SK-N-SH (cell line): ENCODE measurements at regions of chr15 and their contacts with region 1.

Region 1: DNA sequence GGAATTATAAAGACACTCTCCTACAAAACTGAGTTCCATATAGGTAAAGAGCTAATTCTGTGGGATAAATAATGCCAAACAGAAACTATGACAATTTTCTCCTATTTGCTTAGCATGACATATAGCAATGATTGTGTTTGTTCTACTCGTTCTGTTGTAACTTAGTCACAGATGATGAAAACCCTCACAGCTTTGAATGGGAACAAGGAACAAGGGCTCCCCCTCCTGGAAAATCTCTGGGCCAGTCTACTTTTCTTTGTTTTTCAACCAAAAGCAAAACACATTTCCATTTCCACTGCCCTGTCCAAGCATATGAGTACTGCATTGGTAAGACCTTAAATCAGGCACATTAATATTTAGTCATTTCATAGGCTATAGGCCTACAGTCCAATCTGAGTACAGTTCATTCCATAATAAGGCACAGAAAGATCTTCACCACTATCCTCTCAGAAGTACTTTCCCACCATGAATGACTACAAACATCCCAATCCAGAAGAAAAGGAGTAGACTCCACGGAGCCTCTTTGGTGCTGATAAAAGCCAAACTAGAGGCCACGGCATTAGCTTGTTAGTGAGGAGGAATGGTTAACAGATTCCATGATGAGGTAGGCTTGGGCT is 67.1 kb downstream of the ATP8B4 start:
- DNase-seq: peak; percentile 52
- H3K4me3 ChIP-seq: no peak overlapping the region; a peak in 1 of 4 replicates
- H3K27ac ChIP-seq: no peak overlapping the region
- H3K4me1 ChIP-seq: peaks cover 0 to 2% of the 10 kb centered on the region in 2 experiments; a peak in 1 of 4 replicates
- H3K27me3 ChIP-seq: no peaks in the 10 kb centered on the region
- CTCF ChIP-seq: peak; percentile 71
- EP300 ChIP-seq: no peak
- RAD21 ChIP-seq: peak; percentile 93

Region 2: DNA sequence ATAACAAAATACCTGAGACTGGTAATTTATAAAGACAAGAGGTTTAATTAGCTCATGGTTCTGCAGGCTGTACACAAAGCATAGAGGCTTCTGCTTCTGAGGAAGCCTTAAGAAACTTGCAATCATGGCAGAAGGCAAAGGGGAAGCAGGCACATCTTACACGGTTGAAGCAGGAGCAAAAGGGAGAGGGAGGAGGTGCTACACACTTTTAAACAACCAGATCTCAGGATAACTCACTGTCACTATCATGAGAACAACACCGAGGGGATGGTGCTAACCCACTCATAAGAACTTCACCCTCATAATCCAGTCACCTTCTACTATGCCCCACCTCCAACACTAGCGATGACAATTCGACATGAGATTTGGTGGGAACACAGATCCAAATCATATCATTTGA is 12.8 kb after region 1 on chr15:
- CTCF ChIA-PET with region 1: interaction called, 20 read pairs
- POLR2A ChIA-PET with region 1: no interaction called
- DNase-seq: no peak
- H3K4me3 ChIP-seq: no peak overlapping the region
- H3K27ac ChIP-seq: no peak overlapping the region
- H3K4me1 ChIP-seq: no peaks in the 10 kb centered on the region; a peak in 1 of 4 replicates
- H3K27me3 ChIP-seq: no peaks in the 10 kb centered on the region
- CTCF ChIP-seq: no peak
- EP300 ChIP-seq: no peak
- RAD21 ChIP-seq: no peak

Region 3: DNA sequence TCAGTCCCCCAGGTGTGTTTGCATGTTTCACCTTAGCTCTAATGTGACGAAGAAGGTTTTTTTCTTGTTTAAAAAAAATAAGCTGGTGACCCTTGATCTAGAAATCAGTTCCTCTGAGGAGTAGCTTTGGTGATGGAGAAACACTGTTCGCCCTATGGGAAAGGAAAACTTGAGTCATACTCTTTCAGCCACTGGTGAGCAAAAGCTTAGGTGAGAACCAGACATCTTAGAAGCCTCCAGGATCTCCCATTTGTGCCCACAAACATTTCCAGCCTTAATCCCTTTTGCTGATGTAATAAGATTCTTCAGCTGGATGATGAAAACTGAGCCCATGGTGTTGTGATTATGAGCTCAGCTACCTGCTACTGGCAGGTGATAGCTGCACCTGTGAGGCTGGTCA is 167.9 kb after region 1 on chr15:
- CTCF ChIA-PET with region 1: no interaction called
- POLR2A ChIA-PET with region 1: no interaction called
- DNase-seq: no peak
- H3K4me3 ChIP-seq: no peak overlapping the region
- H3K27ac ChIP-seq: no peak overlapping the region
- H3K4me1 ChIP-seq: no peaks in the 10 kb centered on the region
- H3K27me3 ChIP-seq: no peaks in the 10 kb centered on the region
- CTCF ChIP-seq: no peak
- EP300 ChIP-seq: no peak
- RAD21 ChIP-seq: no peak